Breast epithelium (tissue), 4 donors: ENCODE measurements at regions of chr18 and their contacts with region 1.

Region 1: GRCh38 chr18:50786864-50787263 is 33.0 kb downstream of the MRO start:
- DNase-seq: no peak
- H3K4me3 ChIP-seq: no peak overlapping the region
- H3K27ac ChIP-seq: no peak overlapping the region
- H3K4me1 ChIP-seq: no peaks in the 10 kb centered on the region
- H3K27me3 ChIP-seq: no peaks in the 10 kb centered on the region
- CTCF ChIP-seq: no peak
- POLR2A ChIP-seq: no peak

Region 2: DNA sequence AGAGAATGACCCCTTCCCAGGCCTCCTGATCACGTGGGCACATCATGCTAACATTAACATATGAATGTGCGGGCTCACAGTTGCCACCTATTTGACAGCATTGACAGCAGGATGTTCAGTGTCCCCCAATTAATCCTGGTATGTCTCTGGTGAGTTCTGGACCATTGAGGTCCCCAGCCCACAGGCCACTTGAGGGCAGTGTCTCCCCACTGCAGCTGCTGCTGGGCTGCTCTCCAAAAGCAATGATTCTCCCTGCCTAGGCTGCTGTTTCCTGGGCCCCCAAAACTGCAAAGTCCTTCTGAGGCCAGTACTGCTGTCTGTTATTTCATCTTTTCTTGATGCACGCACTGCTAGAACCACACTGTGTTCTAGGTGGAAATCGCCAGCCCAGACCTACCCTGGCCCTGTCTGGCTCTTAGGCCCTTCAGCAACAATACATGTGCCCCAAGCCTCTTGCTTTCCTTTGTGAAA is 279.7 kb before region 1 on chr18:
- intact Hi-C with region 1: loop called (anchors 5 kb)
- DNase-seq: peak in 1 of 2 donors; percentile 29
- H3K4me3 ChIP-seq: no peak overlapping the region
- H3K27ac ChIP-seq: no peak overlapping the region
- H3K4me1 ChIP-seq: no peaks in the 10 kb centered on the region
- H3K27me3 ChIP-seq: no peaks in the 10 kb centered on the region
- CTCF ChIP-seq: peak in 2 of 3 donors; percentile 39 to 44
- POLR2A ChIP-seq: no peak